ENCODE measurements at regions of chrX and their contacts with region 1.

Region 1: DNA sequence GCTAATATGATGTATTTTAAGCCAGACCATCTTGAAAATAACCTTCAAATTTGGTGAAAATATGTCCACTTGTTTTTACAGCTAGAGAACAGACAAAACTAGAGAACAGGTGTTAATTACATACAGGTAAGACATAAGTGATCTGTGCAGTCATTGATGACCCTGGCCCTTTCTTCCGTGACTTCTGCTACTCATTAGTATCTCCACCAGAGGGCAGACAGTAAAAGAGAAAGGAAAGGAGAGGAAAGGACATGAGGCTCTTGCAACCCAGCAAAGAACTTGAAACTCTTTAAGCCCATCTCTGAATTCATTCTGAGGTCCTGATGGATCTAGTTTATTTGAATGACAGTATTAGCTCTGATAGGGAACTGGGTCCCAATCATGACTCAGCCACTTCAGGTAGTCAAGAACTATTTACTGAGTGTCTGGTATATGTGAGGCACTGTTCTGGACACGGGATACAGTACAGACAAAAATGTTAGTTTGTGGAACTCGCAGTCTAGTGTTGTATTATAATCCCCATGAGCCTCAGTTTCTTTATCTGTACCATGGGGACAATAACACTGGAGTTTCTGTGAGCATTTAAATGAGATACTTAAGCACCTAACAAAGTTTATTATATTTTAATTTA is 121.0 kb upstream of the TEX13D start:
- DNase-seq: peak; percentile 47 to 59 (median 53)
- H3K4me3 ChIP-seq: no peak overlapping the region
- H3K4me3 Mint-ChIP-seq: peak overlapping the region in 1 of 8 donors; percentile 10
- H3K27ac ChIP-seq: no peak overlapping the region
- H3K27ac Mint-ChIP-seq: peak overlapping the region in 4 of 7 donors; percentile 2 to 40 (median 28)
- H3K4me1 ChIP-seq: peaks cover 48% of the 10 kb centered on the region
- H3K4me1 Mint-ChIP-seq: peaks cover 33 to 47% (median 40%) of the 10 kb centered on the region in 4 donors
- H3K27me3 ChIP-seq: no peaks in the 10 kb centered on the region
- H3K27me3 Mint-ChIP-seq: no peaks in the 10 kb centered on the region

Region 2: DNA sequence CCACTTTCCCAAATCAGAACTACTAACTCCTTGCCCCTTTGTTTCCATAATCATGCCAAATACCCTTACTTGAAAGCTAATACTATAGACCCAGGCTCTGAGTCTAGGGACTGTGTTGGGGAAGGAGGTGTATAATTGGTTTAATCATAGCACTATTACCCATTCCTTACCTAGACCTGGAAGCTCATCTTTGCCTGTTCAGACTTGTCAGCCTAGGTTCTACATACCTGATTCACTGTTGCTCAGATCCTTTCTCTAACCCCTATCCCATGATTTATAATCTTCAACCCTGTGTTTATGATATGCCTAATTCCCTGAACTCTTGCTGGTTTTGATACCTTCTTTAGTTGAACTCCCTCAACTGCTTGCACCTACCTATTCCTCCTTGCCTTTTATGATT is 1150.4 kb before region 1 on chrX:
- CTCF ChIA-PET with region 1: no interaction called
- POLR2A ChIA-PET with region 1: no interaction called
- intact Hi-C with region 1: no loop called
- DNase-seq: no peak
- H3K4me3 ChIP-seq: no peak overlapping the region
- H3K4me3 Mint-ChIP-seq: no peak overlapping the region
- H3K27ac ChIP-seq: no peak overlapping the region
- H3K27ac Mint-ChIP-seq: no peak overlapping the region
- H3K4me1 ChIP-seq: no peaks in the 10 kb centered on the region
- H3K4me1 Mint-ChIP-seq: no peaks in the 10 kb centered on the region
- H3K27me3 ChIP-seq: no peaks in the 10 kb centered on the region
- H3K27me3 Mint-ChIP-seq: no peaks in the 10 kb centered on the region

Region 3: DNA sequence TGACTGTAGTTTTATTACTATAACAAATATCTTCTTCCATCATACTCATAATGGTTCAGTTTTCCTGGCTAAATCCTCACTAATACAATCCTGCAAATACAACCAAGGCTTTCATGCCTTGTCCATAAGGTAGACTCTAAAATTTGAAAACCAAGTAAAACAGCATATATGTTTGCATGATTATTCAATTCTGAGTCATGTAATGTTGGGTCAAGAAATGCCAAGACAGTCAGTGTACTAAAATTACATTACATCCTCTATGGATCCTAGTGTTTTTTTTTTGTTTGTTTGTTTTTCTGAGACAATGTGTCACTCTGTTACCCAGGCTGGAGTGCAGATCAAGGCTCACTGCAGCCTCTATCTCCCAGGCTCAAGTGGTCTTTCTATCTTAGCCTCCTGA is 82.4 kb after region 1 on chrX:
- CTCF ChIA-PET with region 1: no interaction called
- POLR2A ChIA-PET with region 1: no interaction called
- intact Hi-C with region 1: loop called (anchors 10 kb)
- DNase-seq: no peak
- H3K4me3 ChIP-seq: no peak overlapping the region
- H3K4me3 Mint-ChIP-seq: no peak overlapping the region
- H3K27ac ChIP-seq: no peak overlapping the region
- H3K27ac Mint-ChIP-seq: no peak overlapping the region
- H3K4me1 ChIP-seq: no peaks in the 10 kb centered on the region
- H3K4me1 Mint-ChIP-seq: no peaks in the 10 kb centered on the region
- H3K27me3 ChIP-seq: no peaks in the 10 kb centered on the region
- H3K27me3 Mint-ChIP-seq: no peaks in the 10 kb centered on the region

Region 4: GRCh38 chrX:124388562-124388961 is 177.1 kb after region 1 on chrX:
- CTCF ChIA-PET with region 1: no interaction called
- POLR2A ChIA-PET with region 1: no interaction called
- intact Hi-C with region 1: loop called (anchors 2 kb)
- DNase-seq: peak; percentile 35 to 58 (median 53)
- H3K4me3 ChIP-seq: no peak overlapping the region
- H3K4me3 Mint-ChIP-seq: no peak overlapping the region
- H3K27ac ChIP-seq: no peak overlapping the region
- H3K27ac Mint-ChIP-seq: peak overlapping the region in 1 of 7 donors; percentile 42
- H3K4me1 ChIP-seq: no peaks in the 10 kb centered on the region
- H3K4me1 Mint-ChIP-seq: peaks cover 1 to 12% (median 8%) of the 10 kb centered on the region in 4 donors
- H3K27me3 ChIP-seq: no peaks in the 10 kb centered on the region
- H3K27me3 Mint-ChIP-seq: no peaks in the 10 kb centered on the region

Measured in CD4-positive, alpha-beta memory T cell (primary cell).